ENCODE measurements at regions of chr1 and their contacts with region 1.

Region 1: GRCh38 chr1:22052115-22053016 is at the start of gene CDC42:
- DNase-seq: peak; percentile 98
- H3K4me3 Mint-ChIP-seq: peak within 1 kb of the TSS; percentile 100
- H3K27ac Mint-ChIP-seq: peak within 1 kb of the TSS; percentile 99
- H3K4me1 Mint-ChIP-seq: peaks cover 63% of the 10 kb centered on the region
- H3K27me3 Mint-ChIP-seq: no peaks in the 10 kb centered on the region
- total RNA-seq, gene CDC42: 377 to 388 TPM

Region 2: DNA sequence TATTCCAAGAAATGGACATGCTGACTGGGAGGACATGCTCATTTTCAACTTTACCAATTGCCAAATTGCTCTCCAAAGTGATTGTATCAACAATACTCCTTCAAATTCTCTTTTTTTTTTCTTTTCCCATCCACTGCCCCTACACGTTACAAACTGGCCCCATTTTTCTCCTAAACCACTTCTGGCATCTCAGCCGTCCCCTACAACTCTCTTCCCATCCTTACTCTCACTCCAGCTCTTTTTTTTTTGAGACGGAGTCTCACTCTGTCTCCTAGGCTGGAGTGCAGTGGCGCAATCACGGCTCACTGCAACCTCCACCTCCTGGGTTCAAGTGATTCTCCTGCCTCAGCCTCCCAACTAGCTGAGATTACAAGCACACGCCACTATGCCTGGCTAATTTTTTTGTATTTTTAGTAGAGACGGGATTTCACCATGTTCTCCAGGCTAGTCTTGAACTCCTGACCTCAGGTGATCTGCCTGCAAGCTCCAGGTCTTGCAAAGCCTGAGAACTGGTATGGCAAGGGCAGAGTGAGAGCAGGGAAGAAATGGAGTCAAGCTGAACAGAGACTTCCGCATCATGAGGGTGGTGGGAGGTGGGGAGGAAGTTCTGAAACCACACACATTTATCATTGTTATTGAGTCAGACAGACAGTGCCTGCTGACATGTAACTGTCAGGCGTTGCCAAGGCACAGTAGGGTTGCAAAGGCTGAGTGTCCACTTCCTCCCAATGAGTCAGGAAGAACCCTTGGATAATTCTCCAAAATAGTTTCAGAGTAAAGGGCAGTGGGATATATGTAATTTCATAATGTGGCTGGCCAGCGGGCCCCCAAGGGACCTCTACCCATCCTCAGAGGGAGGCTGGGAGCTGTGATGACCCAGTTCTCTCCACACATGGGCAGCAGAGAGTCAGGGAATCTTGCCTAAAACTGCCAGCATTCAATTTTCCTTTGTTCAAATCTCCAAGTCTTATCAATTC is 33.5 kb before region 1 on chr1:
- CTCF ChIA-PET with region 1: interaction called, 112 read pairs
- POLR2A ChIA-PET with region 1: interaction called, 1,616 read pairs
- DNase-seq: peak; percentile 71
- H3K4me3 Mint-ChIP-seq: no peak overlapping the region
- H3K27ac Mint-ChIP-seq: peak overlapping the region; percentile 81
- H3K4me1 Mint-ChIP-seq: peaks cover 28% of the 10 kb centered on the region
- H3K27me3 Mint-ChIP-seq: no peaks in the 10 kb centered on the region

Region 3: GRCh38 chr1:22039594-22040285 is 12.6 kb before region 1 on chr1:
- CTCF ChIA-PET with region 1: interaction called, 73 read pairs
- POLR2A ChIA-PET with region 1: interaction called, 1,616 read pairs
- DNase-seq: peak; percentile 95
- H3K4me3 Mint-ChIP-seq: peak overlapping the region; percentile 74
- H3K27ac Mint-ChIP-seq: peak overlapping the region; percentile 99
- H3K4me1 Mint-ChIP-seq: peaks cover 50% of the 10 kb centered on the region
- H3K27me3 Mint-ChIP-seq: no peaks in the 10 kb centered on the region

Region 4: GRCh38 chr1:22077728-22078127 is 25.4 kb after region 1 on chr1:
- CTCF ChIA-PET with region 1: no interaction called
- POLR2A ChIA-PET with region 1: interaction called, 1,616 read pairs
- DNase-seq: no peak
- H3K4me3 Mint-ChIP-seq: no peak overlapping the region
- H3K27ac Mint-ChIP-seq: no peak overlapping the region
- H3K4me1 Mint-ChIP-seq: peaks cover 76% of the 10 kb centered on the region
- H3K27me3 Mint-ChIP-seq: no peaks in the 10 kb centered on the region

Region 5: DNA sequence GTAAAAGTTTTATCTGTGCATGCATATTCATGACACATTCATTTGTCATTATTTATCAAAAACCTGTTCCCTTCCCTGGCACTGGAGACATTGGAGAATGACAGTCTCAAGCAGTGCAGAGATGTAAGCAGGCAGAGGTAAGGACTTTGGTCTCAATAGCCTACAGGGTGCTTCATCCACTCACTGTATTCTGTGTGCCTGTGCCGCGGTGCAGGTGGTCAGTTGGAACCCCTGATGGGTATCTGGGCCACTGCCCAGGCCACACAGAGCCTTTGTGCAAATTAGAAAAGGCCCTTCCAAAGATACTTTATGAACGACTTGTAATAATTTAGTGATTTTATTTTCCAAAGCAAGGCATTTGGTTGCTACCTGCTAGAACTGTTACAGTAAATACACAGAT is 44.1 kb after region 1 on chr1:
- CTCF ChIA-PET with region 1: interaction called, 9 read pairs
- POLR2A ChIA-PET with region 1: interaction called, 14 read pairs
- DNase-seq: no peak
- H3K4me3 Mint-ChIP-seq: no peak overlapping the region
- H3K27ac Mint-ChIP-seq: no peak overlapping the region
- H3K4me1 Mint-ChIP-seq: peaks cover 65% of the 10 kb centered on the region
- H3K27me3 Mint-ChIP-seq: no peaks in the 10 kb centered on the region